ENCODE measurements at regions of chr7 and their contacts with region 1.

Region 1: DNA sequence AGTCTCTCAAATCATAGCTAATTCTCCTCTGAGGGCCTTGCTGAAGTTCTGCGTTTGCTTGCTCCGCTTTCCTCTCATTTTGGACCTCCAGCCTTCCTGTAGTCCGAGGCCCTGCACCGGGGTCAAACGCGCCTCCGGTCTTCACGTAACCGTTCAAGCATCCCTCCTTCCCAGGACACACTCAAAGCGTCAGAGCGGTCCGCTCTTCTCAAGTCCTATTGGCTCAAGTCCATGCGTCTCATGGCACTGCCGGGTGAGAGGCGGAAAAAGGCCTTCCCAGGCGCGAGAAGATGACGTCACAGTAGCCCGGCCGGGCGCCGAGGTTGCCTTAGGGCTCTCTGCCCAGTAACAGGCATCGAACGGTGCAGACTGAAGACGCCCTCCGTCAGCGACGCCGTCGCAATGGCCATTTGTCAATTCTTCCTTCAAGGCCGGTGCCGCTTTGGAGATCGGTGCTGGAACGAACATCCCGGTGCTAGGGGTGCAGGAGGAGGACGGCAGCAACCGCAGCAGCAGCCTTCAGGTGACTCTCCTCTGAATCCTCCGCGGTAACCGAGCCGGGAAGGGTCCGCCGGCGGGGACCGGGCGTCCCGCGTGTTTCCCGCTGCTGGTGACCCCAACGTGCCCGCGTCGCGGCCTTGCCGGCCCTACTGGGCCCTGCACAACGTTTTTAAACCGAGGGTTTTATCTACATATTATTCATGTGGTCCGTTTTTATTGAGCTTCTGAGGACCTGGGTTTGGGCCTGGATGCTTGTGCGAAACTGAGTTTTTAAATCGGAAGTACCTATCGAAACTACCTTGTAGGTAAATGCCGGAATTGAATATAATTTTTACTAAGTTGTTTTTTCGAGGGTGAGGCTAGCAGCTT is at the start of gene NUP42:
- DNase-seq: peak; percentile 99
- H3K4me3 ChIP-seq: peak within 1 kb of the TSS; percentile 77 to 94 (median 90)
- H3K27ac ChIP-seq: peak within 1 kb of the TSS; percentile 54
- H3K4me1 ChIP-seq: peaks cover 14% of the 10 kb centered on the region
- H3K27me3 ChIP-seq: no peaks in the 10 kb centered on the region
- CTCF ChIP-seq: no peak
- POLR2A ChIP-seq: peak; percentile 57
- total RNA-seq, gene NUP42: 38.6 and 40.0 TPM in 2 replicates

Region 2: DNA sequence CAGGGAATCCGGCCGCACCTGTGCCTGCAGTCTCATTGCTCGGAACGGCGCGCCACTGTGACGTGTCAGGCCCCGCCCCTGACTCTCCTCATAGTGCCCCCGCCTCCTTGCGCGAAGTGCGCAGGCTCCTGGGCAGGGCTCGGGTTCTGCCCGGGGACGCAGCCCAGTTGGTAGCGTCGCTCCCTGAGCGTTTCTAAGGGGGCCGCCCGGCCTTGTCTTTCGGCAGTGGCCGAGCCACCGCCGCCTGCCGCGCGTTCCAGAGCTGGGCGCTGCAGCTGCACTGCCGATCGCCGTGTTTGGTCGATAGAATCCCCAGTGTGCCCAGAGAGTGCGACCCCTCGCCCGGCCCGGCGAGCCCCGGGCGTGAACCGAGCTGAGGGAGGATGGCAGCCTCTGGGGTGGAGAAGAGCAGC is 76.3 kb before region 1 on chr7 and contains the start of gene KLHL7:
- CTCF ChIA-PET with region 1: interaction called, 6 read pairs
- POLR2A ChIA-PET with region 1: no interaction called
- dilution Hi-C with region 1: no loop called
- intact Hi-C with region 1: loop called (anchors 1 kb)
- DNase-seq: peak; percentile 95
- H3K4me3 ChIP-seq: peak within 1 kb of the TSS; percentile 89 to 99 (median 96)
- H3K27ac ChIP-seq: peak within 1 kb of the TSS; percentile 78
- H3K4me1 ChIP-seq: peaks cover 17% of the 10 kb centered on the region
- H3K27me3 ChIP-seq: no peaks in the 10 kb centered on the region
- CTCF ChIP-seq: no peak
- POLR2A ChIP-seq: peak; percentile 93
- total RNA-seq, gene KLHL7: 29.0 and 32.1 TPM in 2 replicates

Region 3: GRCh38 chr7:23261843-23262452 is 80.0 kb after region 1 on chr7:
- CTCF ChIA-PET with region 1: interaction called, 4 read pairs
- POLR2A ChIA-PET with region 1: no interaction called
- dilution Hi-C with region 1: no loop called
- intact Hi-C with region 1: loop called (anchors 2 kb)
- DNase-seq: peak; percentile 69
- H3K4me3 ChIP-seq: no peak overlapping the region
- H3K27ac ChIP-seq: no peak overlapping the region
- H3K4me1 ChIP-seq: no peaks in the 10 kb centered on the region
- H3K27me3 ChIP-seq: peaks cover 5 to 14% of the 10 kb centered on the region in 2 experiments
- CTCF ChIP-seq: peak; percentile 87 to 93
- POLR2A ChIP-seq: no peak

Region 4: GRCh38 chr7:23298885-23299769 is 117.2 kb after region 1 on chr7 and contains the start of gene MALSU1:
- CTCF ChIA-PET with region 1: no interaction called
- POLR2A ChIA-PET with region 1: no interaction called
- dilution Hi-C with region 1: no loop called
- intact Hi-C with region 1: no loop called
- DNase-seq: peak; percentile 98
- H3K4me3 ChIP-seq: peak within 1 kb of the TSS; percentile 73 to 81 (median 75)
- H3K27ac ChIP-seq: peak within 1 kb of the TSS; percentile 32
- H3K4me1 ChIP-seq: peaks cover 11% of the 10 kb centered on the region
- H3K27me3 ChIP-seq: no peaks in the 10 kb centered on the region
- CTCF ChIP-seq: no peak
- POLR2A ChIP-seq: peak; percentile 88
- total RNA-seq, gene MALSU1: 58.4 and 62.6 TPM in 2 replicates

Region 5: GRCh38 chr7:23520582-23520981 is 338.7 kb after region 1 on chr7:
- CTCF ChIA-PET with region 1: no interaction called
- POLR2A ChIA-PET with region 1: no interaction called
- dilution Hi-C with region 1: no loop called
- intact Hi-C with region 1: loop called (anchors 10 kb)
- DNase-seq: no peak
- H3K4me3 ChIP-seq: no peak overlapping the region
- H3K27ac ChIP-seq: no peak overlapping the region
- H3K4me1 ChIP-seq: no peaks in the 10 kb centered on the region
- H3K27me3 ChIP-seq: no peaks in the 10 kb centered on the region
- CTCF ChIP-seq: peak in 1 of 2 donors; percentile 7
- POLR2A ChIP-seq: no peak

Region 6: DNA sequence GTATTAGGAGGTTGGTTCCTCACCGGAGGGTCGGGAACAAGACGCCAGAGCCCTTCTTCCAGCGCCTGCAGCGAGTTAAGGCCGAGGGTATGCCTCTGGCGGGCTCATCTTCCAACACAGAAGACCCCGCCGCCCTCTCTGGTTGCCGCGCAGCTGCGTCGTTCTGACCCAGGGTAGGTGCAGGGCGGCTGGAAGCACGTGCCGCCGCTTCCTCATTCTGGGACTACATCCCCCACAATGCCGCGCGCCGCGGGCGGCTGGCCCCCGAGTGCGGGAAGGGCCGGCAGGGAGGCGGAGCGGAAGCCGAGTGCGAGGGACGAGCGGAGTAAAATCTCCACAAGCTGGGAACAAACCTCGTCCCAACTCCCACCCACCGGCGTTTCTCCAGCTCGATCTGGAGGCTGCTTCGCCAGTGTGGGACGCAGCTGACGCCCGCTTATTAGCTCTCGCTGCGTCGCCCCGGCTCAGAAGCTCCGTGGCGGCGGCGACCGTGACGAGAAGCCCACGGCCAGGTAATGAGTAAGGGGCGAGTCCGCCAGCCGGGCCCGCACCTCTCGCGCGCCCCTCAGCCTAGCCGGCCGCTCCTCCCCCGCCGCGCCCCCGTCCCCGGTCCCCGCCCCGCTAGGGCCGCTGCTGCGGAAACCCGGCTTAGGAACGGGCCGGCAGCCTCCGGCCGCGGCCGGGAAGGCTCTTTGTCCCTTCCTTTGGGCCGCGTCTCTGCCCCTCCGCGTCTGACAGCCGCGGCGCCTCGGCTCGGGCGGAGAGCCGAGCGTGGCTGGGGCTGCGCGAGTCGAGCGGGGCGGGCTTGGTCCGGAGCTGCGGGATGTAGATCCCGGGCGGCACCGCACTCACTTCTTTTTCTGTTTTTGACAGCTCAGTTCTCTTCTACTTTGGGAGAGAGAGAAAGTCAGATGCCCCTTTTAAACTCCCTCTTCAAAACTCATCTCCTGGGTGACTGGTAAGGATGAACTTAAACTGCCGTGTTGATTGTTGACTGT is 415.5 kb after region 1 on chr7 and contains the start of gene CCDC126:
- CTCF ChIA-PET with region 1: no interaction called
- POLR2A ChIA-PET with region 1: no interaction called
- dilution Hi-C with region 1: no loop called
- intact Hi-C with region 1: loop called (anchors 1 kb)
- DNase-seq: peak; percentile 93
- H3K4me3 ChIP-seq: peak within 1 kb of the TSS; percentile 67 to 94 (median 70)
- H3K27ac ChIP-seq: peak within 1 kb of the TSS; percentile 73
- H3K4me1 ChIP-seq: peaks cover 12% of the 10 kb centered on the region
- H3K27me3 ChIP-seq: peaks cover 0 to 5% of the 10 kb centered on the region in 2 experiments
- CTCF ChIP-seq: no peak
- POLR2A ChIP-seq: peak; percentile 16
- total RNA-seq, gene CCDC126: 7.1 and 8.6 TPM in 2 replicates